Activated CD4-positive, alpha-beta T cell treated with anti-CD3 and anti-CD28 coated beads for 36 hours (primary cell): ENCODE measurements at regions of chr6 and their contacts with region 1.

Region 1: DNA sequence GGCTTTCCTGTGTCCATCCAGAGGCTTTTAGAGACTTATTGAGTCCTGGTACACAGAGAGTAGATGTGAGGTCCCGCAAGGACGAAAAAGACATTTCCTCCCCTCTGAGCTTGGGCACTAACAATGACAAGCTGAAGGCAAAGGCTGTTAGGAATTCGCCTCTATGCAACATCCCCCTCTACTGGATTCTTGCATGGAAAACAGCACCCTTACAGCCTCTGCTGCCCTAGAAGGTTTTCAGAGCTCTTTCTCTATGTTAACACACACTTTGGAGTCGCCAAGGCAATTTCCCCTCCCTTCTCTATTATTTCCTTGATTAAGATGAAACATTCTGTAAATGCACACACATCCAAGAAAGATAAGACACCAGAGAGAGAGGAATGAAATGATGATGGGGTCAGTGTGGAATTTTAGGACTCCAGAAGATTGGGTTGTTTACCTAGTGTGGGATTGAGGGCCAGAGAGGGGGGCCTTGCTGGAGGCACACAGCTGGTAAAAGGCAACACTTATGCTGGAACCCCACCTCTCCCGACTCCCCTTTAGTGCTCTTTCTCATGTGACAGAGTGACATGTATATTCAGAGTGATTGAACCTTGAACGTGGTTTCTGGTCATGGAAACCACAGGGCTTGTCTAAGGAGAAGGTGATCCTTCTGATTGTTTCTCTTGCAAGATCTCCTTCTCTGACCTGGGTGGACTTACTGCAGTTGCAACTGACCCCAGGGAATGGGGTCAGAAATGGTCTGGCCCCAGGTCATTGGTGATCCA is 300.7 kb downstream of the CLIC5 start:
- DNase-seq: peak; percentile 57
- ATAC-seq: peak; percentile 43
- H3K4me3 Mint-ChIP-seq: peak overlapping the region; percentile 24
- H3K27ac Mint-ChIP-seq: peak overlapping the region; percentile 89
- H3K4me1 Mint-ChIP-seq: peaks cover 48% of the 10 kb centered on the region
- H3K27me3 Mint-ChIP-seq: peaks cover 2% of the 10 kb centered on the region

Region 2: GRCh38 chr6:44593539-44593944 is 1121.4 kb before region 1 on chr6:
- CTCF ChIA-PET with region 1: no interaction called
- POLR2A ChIA-PET with region 1: no interaction called
- intact Hi-C with region 1: loop called (anchors 1 to 2 kb)
- DNase-seq: peak; percentile 80
- ATAC-seq: peak; percentile 87
- H3K4me3 Mint-ChIP-seq: no peak overlapping the region
- H3K27ac Mint-ChIP-seq: peak overlapping the region; percentile 9
- H3K4me1 Mint-ChIP-seq: peaks cover 3% of the 10 kb centered on the region
- H3K27me3 Mint-ChIP-seq: peaks cover 11% of the 10 kb centered on the region

Region 3: DNA sequence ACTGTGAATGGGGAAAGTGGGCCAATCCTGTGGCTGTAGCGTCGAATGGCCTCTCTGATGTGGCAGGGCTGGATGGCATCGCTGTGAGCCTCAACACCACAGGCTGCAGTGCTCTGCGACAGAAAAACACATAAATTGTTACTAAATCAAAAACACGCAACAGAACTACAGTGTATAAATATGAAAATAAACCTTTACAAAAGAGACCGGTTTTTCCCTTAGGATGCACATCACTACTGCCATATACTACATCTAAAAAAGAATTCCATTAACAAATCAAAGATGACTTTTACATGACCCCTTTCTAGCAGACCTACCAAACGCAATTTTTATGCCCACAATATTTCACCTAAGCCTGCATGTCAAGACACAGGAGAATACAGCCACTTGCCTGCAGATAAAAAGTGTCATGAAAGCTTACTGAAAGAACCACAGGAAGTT is 782.3 kb before region 1 on chr6:
- CTCF ChIA-PET with region 1: interaction called, 3 read pairs
- POLR2A ChIA-PET with region 1: no interaction called
- intact Hi-C with region 1: loop called (anchors 10 kb)
- DNase-seq: peak; percentile 55
- ATAC-seq: peak; percentile 42
- H3K4me3 Mint-ChIP-seq: peak overlapping the region; percentile 67
- H3K27ac Mint-ChIP-seq: peak overlapping the region; percentile 81
- H3K4me1 Mint-ChIP-seq: peaks cover 52% of the 10 kb centered on the region
- H3K27me3 Mint-ChIP-seq: no peaks in the 10 kb centered on the region

Region 4: GRCh38 chr6:45436544-45437438 is 278.1 kb before region 1 on chr6:
- CTCF ChIA-PET with region 1: no interaction called
- POLR2A ChIA-PET with region 1: no interaction called
- intact Hi-C with region 1: loop called (anchors 1 to 2 kb)
- DNase-seq: peak; percentile 69
- ATAC-seq: peak; percentile 92
- H3K4me3 Mint-ChIP-seq: peak overlapping the region; percentile 59
- H3K27ac Mint-ChIP-seq: peak overlapping the region; percentile 92
- H3K4me1 Mint-ChIP-seq: peaks cover 74% of the 10 kb centered on the region
- H3K27me3 Mint-ChIP-seq: peaks cover 2% of the 10 kb centered on the region

Region 5: GRCh38 chr6:45590225-45590624 is 124.7 kb before region 1 on chr6:
- CTCF ChIA-PET with region 1: interaction called, 4 read pairs
- POLR2A ChIA-PET with region 1: no interaction called
- intact Hi-C with region 1: loop called (anchors 2 to 5 kb)
- DNase-seq: no peak
- ATAC-seq: peak; percentile 40
- H3K4me3 Mint-ChIP-seq: no peak overlapping the region
- H3K27ac Mint-ChIP-seq: peak overlapping the region; percentile 80
- H3K4me1 Mint-ChIP-seq: peaks cover 81% of the 10 kb centered on the region
- H3K27me3 Mint-ChIP-seq: no peaks in the 10 kb centered on the region

Region 6: GRCh38 chr6:45737331-45738056 is 22.6 kb after region 1 on chr6:
- CTCF ChIA-PET with region 1: interaction called, 5 read pairs
- POLR2A ChIA-PET with region 1: interaction called, 4 read pairs
- intact Hi-C with region 1: loop called (anchors 1 kb)
- DNase-seq: peak; percentile 27
- ATAC-seq: peak; percentile 75
- H3K4me3 Mint-ChIP-seq: peak overlapping the region; percentile 13
- H3K27ac Mint-ChIP-seq: peak overlapping the region; percentile 84
- H3K4me1 Mint-ChIP-seq: peaks cover 56% of the 10 kb centered on the region
- H3K27me3 Mint-ChIP-seq: peaks cover 12% of the 10 kb centered on the region

Region 7: GRCh38 chr6:45922728-45923351 is 207.9 kb after region 1 on chr6:
- CTCF ChIA-PET with region 1: interaction called, 6 read pairs
- POLR2A ChIA-PET with region 1: interaction called, 4 read pairs
- intact Hi-C with region 1: loop called (anchors 1 kb)
- DNase-seq: peak; percentile 83
- ATAC-seq: peak; percentile 22
- H3K4me3 Mint-ChIP-seq: peak overlapping the region; percentile 15
- H3K27ac Mint-ChIP-seq: peak overlapping the region; percentile 90
- H3K4me1 Mint-ChIP-seq: peaks cover 53% of the 10 kb centered on the region
- H3K27me3 Mint-ChIP-seq: no peaks in the 10 kb centered on the region